CD8-positive, alpha-beta T cell (primary cell): ENCODE measurements at regions of chr13 and their contacts with region 1.

Region 1: GRCh38 chr13:74090869-74091605 is 43.2 kb downstream of the KLF12 start:
- DNase-seq: peak in 2 of 9 experiments; percentile 40 to 58
- ATAC-seq: peak; percentile 66
- H3K4me3 ChIP-seq: no peak overlapping the region
- H3K4me3 Mint-ChIP-seq: peak overlapping the region; percentile 9
- H3K27ac ChIP-seq: peak overlapping the region in 1 of 2 experiments; percentile 40
- H3K27ac Mint-ChIP-seq: peak overlapping the region; percentile 60
- H3K4me1 ChIP-seq: peaks cover 56% of the 10 kb centered on the region
- H3K4me1 Mint-ChIP-seq: peaks cover 73% of the 10 kb centered on the region
- H3K27me3 ChIP-seq: no peaks in the 10 kb centered on the region
- H3K27me3 Mint-ChIP-seq: no peaks in the 10 kb centered on the region
- CTCF ChIP-seq: no peak

Region 2: GRCh38 chr13:73913053-73913740 is 177.8 kb before region 1 on chr13:
- CTCF ChIA-PET with region 1: no interaction called
- POLR2A ChIA-PET with region 1: no interaction called
- intact Hi-C with region 1: no loop called
- DNase-seq: peak in 1 of 9 experiments; percentile 25
- ATAC-seq: peak; percentile 31
- H3K4me3 ChIP-seq: no peak overlapping the region
- H3K4me3 Mint-ChIP-seq: no peak overlapping the region
- H3K27ac ChIP-seq: no peak overlapping the region
- H3K27ac Mint-ChIP-seq: peak overlapping the region; percentile 37
- H3K4me1 ChIP-seq: no peaks in the 10 kb centered on the region
- H3K4me1 Mint-ChIP-seq: peaks cover 54% of the 10 kb centered on the region
- H3K27me3 ChIP-seq: no peaks in the 10 kb centered on the region
- H3K27me3 Mint-ChIP-seq: no peaks in the 10 kb centered on the region
- CTCF ChIP-seq: no peak

Region 3: DNA sequence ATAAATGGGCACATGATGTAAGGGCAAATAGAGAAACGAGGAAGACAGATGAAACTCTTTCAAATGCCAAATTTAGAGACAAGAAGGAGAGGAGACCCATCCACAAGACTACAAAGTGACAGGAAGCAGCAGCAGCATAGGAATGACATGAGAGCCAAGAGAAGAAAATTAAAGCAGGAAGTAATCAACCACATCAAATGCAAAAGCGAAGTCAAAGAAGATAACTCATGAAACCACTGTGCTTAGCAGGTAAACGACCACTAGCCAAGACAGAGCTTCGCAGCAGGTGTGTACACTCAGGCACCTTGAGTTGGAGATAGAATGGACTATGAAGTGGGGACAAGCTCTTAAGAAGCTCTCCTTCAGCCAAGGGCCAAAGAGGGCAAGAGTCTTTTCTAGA is 21.0 kb before region 1 on chr13:
- CTCF ChIA-PET with region 1: no interaction called
- POLR2A ChIA-PET with region 1: interaction called, 4 read pairs
- intact Hi-C with region 1: loop called in 1 of 2 experiments (anchors 2 kb)
- DNase-seq: peak in 6 of 9 experiments; percentile 7 to 79 (median 47)
- ATAC-seq: peak; percentile 75
- H3K4me3 ChIP-seq: peak overlapping the region; percentile 7 to 14
- H3K4me3 Mint-ChIP-seq: peak overlapping the region; percentile 70
- H3K27ac ChIP-seq: peak overlapping the region in 1 of 2 experiments; percentile 69
- H3K27ac Mint-ChIP-seq: peak overlapping the region; percentile 89
- H3K4me1 ChIP-seq: peaks cover 50% of the 10 kb centered on the region
- H3K4me1 Mint-ChIP-seq: peaks cover 78% of the 10 kb centered on the region
- H3K27me3 ChIP-seq: no peaks in the 10 kb centered on the region
- H3K27me3 Mint-ChIP-seq: no peaks in the 10 kb centered on the region
- CTCF ChIP-seq: no peak

Region 4: DNA sequence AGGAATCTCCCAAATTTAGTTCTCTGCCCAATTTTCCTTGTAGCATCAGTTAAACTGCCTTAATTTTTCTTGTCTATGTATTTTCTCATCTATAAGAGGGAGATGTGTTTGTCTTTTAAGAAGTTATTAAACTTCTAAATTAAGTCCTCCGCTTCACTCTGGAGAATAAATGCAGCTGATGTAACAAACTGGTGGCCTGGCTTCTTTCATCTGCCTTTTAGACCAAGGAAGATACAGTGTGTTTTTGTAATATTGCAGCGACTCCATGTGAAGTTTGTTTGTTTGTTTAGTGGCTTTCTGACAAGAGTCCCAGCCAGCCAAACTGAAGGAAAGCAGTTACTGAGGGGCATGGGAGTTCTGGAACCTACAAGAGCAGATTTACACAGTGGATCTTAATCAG is 13.2 kb before region 1 on chr13:
- CTCF ChIA-PET with region 1: interaction called, 3 read pairs
- POLR2A ChIA-PET with region 1: interaction called, 3 read pairs
- intact Hi-C with region 1: loop called in 1 of 2 experiments (anchors 2 kb)
- DNase-seq: no peak
- ATAC-seq: no peak
- H3K4me3 ChIP-seq: no peak overlapping the region
- H3K4me3 Mint-ChIP-seq: no peak overlapping the region
- H3K27ac ChIP-seq: no peak overlapping the region
- H3K27ac Mint-ChIP-seq: no peak overlapping the region
- H3K4me1 ChIP-seq: peaks cover 35% of the 10 kb centered on the region
- H3K4me1 Mint-ChIP-seq: peaks cover 81% of the 10 kb centered on the region
- H3K27me3 ChIP-seq: no peaks in the 10 kb centered on the region
- H3K27me3 Mint-ChIP-seq: no peaks in the 10 kb centered on the region
- CTCF ChIP-seq: no peak

Region 5: GRCh38 chr13:74104661-74105275 is 13.7 kb after region 1 on chr13:
- CTCF ChIA-PET with region 1: no interaction called
- POLR2A ChIA-PET with region 1: interaction called, 4 read pairs
- intact Hi-C with region 1: loop called in 1 of 2 experiments (anchors 2 kb)
- DNase-seq: no peak
- ATAC-seq: no peak
- H3K4me3 ChIP-seq: no peak overlapping the region
- H3K4me3 Mint-ChIP-seq: no peak overlapping the region
- H3K27ac ChIP-seq: no peak overlapping the region
- H3K27ac Mint-ChIP-seq: no peak overlapping the region
- H3K4me1 ChIP-seq: peaks cover 15% of the 10 kb centered on the region
- H3K4me1 Mint-ChIP-seq: peaks cover 75% of the 10 kb centered on the region
- H3K27me3 ChIP-seq: no peaks in the 10 kb centered on the region
- H3K27me3 Mint-ChIP-seq: no peaks in the 10 kb centered on the region
- CTCF ChIP-seq: no peak